Left colon (tissue), 2 donors: ENCODE measurements at regions of chr19 and their contacts with region 1.

Region 1: GRCh38 chr19:45643024-45643926 is 4.1 kb upstream of the EML2 start:
- DNase-seq: peak; percentile 75 to 92
- ATAC-seq: peak; percentile 39

Region 2: GRCh38 chr19:45514376-45515051 is 128.8 kb before region 1 on chr19:
- intact Hi-C with region 1: loop called in 1 of 2 experiments (anchors 5 kb)
- DNase-seq: peak; percentile 89 to 93
- ATAC-seq: peak; percentile 79

Region 3: DNA sequence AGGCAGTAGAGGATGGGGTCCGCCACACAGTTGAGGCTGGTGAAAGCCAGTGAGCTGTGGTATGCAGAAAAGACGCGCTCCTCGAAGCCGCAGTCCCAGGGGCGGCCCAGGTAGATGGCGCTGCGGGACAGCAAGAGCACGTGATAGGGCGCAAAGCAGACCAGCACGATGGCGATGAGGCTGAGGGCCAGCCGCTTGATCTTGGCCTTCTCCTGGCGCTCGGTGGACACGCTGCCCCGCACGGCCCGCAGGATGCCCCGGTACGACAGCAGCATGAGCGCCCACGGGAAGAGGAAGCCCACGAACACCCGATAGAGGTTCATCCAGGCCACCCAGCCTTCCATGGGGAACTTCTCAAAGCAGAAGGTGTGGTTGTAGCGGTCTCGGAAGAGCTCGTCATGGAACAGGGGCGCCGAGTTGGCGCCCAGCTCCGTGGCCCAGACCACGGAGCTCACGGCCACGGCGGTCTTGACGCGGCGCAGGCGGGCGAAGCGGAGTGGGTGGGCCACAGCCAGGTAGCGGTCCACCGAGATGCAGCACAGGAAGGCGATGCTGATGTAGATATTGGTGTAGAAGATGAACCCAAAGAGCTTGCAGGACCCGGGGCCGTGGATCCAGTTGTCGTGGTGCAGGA is 52.2 kb before region 1 on chr19:
- intact Hi-C with region 1: loop called in 1 of 2 experiments (anchors 10 kb)
- DNase-seq: peak; percentile 51 to 76
- ATAC-seq: peak; percentile 89

Region 4: DNA sequence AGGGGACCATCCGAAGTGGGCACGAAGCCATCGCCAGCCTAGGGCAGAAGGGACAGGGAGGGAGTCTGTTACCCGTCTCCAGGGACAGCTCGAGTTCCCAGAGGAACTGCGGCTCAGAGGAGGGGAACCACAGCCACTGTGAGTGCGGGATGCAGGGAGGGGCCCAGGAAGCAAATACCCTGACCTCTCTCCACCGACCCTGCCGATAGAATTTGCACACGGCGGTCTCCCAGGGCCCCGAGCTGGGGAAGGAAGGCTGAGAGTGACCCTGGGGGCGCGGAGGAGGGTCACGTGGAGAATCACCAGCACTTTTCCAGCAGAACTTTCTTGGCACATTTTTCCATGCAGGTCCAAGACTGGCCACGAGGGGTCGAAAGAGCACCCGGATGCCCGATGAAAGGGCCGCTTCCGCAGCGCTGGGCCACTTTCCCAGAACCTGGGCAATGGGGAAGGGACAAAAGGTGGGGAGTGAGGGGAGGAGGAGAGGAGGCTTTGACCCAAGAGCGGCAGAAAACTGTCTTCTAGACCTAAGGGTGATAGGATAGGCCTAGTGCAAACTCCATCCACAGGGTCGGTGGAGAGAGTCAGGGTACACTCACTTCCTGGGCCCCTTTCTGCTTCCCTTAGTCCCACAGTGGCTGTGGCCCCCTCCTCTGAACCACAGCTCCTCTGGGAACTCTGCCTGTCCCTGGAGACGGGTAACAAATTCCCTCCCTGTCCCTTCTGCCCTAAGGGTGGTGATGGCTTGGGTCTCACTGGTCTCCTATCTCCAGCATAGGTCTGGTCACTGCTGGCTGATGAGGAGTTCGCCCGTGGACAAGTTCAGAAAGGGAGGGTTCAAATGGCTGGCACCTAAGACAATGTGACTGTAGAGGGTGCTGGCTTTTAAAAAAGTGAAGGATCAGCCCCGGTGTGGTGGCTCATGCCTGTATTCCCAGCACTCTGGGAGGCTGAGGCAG is 35.9 kb before region 1 on chr19:
- intact Hi-C with region 1: loop called in 1 of 2 experiments (anchors 5 kb)
- DNase-seq: peak; percentile 61 to 80
- ATAC-seq: peak; percentile 90

Region 5: GRCh38 chr19:45681391-45682015 is 38.2 kb after region 1 on chr19:
- intact Hi-C with region 1: no loop called
- DNase-seq: peak; percentile 87 to 88
- ATAC-seq: peak; percentile 77